ENCODE measurements at regions of chr1 and their contacts with region 1.

Region 1: GRCh38 chr1:110209715-110210603 is at the start of gene KCNC4:
- DNase-seq: peak; percentile 97
- total RNA-seq, gene KCNC4: 9.3 to 15.5 TPM

Region 2: DNA sequence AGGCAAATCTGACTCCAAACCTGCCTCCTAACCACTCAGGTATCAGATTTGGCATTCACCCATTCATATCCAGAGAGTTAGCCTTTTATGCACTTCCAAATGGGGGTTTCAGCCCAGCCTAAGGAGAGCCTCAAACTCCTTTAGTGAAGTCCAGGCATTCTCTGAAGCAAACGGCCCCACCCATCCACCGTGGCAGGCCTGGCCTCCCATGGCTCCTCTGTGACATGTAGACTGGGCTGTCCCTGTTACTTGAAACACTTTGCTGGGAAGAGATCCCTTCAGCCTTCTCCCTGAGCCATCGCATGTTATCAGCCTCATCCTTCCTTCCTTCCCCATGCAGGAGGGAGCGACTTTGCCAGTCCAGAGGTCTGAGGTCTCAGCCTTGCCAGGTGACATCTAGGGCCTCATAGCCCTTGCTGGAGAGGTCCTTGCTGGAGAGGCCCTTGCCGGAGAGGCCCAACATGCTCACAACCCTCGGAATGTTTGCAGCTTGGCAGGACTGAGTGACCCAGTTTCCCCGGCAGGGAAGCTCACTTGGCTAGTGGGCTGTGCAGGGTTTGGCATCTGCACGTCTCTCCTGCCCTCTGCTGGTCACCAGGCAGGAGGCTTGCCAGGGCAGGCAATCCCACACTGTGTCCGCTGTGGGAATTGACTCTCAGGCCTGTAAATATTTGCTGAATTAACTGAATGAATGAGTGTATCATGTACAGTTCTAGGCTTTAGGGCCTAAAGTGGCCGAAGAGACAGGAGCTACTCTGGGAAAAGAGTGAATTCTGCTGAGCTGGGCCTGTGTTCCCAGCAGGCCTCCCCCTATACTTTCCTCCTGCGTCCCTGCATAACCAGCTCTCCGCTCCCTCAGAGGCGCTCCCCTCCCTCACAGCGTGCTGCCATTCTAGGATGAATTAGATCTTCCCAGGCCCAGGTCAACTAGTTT is 102.5 kb after region 1 on chr1:
- intact Hi-C with region 1: loop called (anchors 2 kb)
- DNase-seq: peak; percentile 94

Region 3: GRCh38 chr1:110455151-110455550 is 245.2 kb after region 1 on chr1:
- intact Hi-C with region 1: loop called (anchors 2 to 5 kb)
- DNase-seq: peak; percentile 38

Region 4: GRCh38 chr1:110460253-110461220 is 250.6 kb after region 1 on chr1:
- intact Hi-C with region 1: loop called (anchors 2 to 5 kb)
- DNase-seq: peak; percentile 83

Region 5: GRCh38 chr1:110495926-110496600 is 286.1 kb after region 1 on chr1:
- intact Hi-C with region 1: loop called in 1 of 2 experiments (anchors 10 kb)
- DNase-seq: peak; percentile 91

Measured in posterior vena cava (tissue), 2 donors.